Heart right ventricle (tissue), 16 donors: ENCODE measurements at regions of chr2 and their contacts with region 1.

Region 1: GRCh38 chr2:118882709-118883210 is 35.3 kb upstream of the EN1 start:
- DNase-seq: peak; percentile 28 to 40
- ATAC-seq: peak; percentile 51 to 92 (median 78)
- H3K4me3 ChIP-seq: peak overlapping the region in 4 of 10 donors; percentile 17 to 37 (median 29)
- H3K27ac ChIP-seq: no peak overlapping the region
- H3K4me1 ChIP-seq: peaks cover 0 to 15% (median 0%) of the 10 kb centered on the region in 9 donors
- H3K27me3 ChIP-seq: peaks cover 0 to 52% (median 45%) of the 10 kb centered on the region in 7 donors
- CTCF ChIP-seq: peak; percentile 49 to 93 (median 80)

Region 2: DNA sequence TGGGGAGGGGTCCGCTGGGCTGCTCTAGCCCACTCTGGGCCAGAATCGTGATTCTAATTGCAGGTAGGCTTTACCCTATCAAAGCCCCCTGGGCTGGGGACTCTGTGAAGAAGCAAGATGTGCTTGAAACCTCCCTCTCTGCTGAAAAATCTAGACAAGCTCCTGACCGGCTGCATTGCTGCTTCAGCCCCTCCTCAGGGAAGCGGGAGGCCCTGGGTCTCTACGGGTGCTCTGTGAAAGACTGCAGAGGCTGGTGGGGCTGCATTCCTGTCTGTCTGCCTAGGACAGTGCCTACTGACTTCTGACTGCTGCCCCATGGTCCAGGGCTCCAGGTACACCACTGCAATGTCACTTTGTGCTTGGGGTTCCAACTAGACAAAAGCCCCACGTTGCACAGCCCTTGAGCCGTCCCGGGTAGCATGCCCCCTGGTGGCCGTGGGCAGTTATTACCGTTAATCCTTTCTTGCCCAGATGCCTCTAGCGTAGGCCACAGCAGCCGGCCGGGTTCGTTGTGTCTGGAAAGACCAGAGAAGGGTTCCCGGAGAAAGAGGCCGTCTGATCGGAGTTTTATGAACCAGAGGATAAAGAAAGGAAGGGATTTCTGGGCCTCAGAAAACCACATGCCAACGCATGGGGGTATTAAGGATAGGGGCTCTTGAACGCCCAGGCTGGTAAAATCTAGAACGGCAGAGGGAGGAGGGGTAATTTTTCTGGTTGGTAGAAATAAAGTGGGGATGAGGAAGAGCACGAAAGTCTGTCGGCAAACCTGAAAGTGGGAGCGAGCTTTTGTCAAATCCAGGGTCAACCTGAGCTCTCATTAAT is 291.7 kb after region 1 on chr2:
- intact Hi-C with region 1: loop called in 1 of 10 experiments (anchors 5 kb)
- DNase-seq: peak in 1 of 2 donors; percentile 37
- ATAC-seq: peak in 6 of 8 donors; percentile 33 to 56 (median 44)
- H3K4me3 ChIP-seq: no peak overlapping the region
- H3K27ac ChIP-seq: no peak overlapping the region
- H3K4me1 ChIP-seq: no peaks in the 10 kb centered on the region
- H3K27me3 ChIP-seq: peaks cover 0 to 9% (median 0%) of the 10 kb centered on the region in 7 donors
- CTCF ChIP-seq: peak; percentile 25 to 83 (median 63)

Region 3: GRCh38 chr2:119290859-119291587 is 408.3 kb after region 1 on chr2:
- intact Hi-C with region 1: loop called in 8 of 10 experiments (anchors 1 to 10 kb)
- DNase-seq: peak; percentile 78 to 86
- ATAC-seq: peak; percentile 60 to 90 (median 86)
- H3K4me3 ChIP-seq: no peak overlapping the region
- H3K27ac ChIP-seq: no peak overlapping the region
- H3K4me1 ChIP-seq: peaks cover 0 to 18% (median 3%) of the 10 kb centered on the region in 9 donors
- H3K27me3 ChIP-seq: no peaks in the 10 kb centered on the region
- CTCF ChIP-seq: peak; percentile 19 to 99 (median 91)

Region 4: DNA sequence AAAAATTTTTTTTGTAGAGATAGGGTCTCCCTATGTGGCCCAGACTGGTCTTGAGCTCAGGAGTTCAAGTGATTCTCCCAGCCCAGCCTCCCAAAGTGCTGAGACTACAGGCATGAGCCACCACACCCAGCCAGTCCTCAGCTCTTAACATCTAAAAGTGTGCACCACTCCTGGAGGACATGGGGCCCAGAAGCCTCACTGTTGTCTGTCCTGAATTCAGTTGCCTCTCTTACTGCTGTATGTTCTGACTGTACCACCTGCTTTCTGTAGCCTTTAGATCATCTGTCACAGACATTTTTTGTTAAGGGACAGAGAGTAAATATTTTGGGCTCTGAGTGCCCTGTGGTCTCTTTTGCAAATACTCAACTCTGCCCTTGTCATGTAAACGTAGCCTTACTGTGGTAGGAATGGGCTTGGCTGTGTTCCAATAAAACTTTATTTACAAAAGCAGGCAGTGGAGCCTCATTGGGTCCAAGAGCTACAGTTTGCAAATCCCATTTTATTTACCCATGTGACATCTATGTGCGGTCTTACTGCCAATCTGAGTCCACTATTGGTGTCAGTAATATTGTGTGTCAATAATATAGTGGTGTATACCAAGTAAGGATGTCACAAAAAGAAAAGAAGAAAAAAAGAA is 587.0 kb after region 1 on chr2:
- intact Hi-C with region 1: loop called in 3 of 10 experiments (anchors 5 to 10 kb)
- DNase-seq: no peak
- ATAC-seq: no peak
- H3K4me3 ChIP-seq: no peak overlapping the region
- H3K27ac ChIP-seq: no peak overlapping the region
- H3K4me1 ChIP-seq: peaks cover 0 to 19% (median 6%) of the 10 kb centered on the region in 9 donors
- H3K27me3 ChIP-seq: no peaks in the 10 kb centered on the region
- CTCF ChIP-seq: no peak